ENCODE measurements at regions of chr5 and their contacts with region 1.

Region 1: DNA sequence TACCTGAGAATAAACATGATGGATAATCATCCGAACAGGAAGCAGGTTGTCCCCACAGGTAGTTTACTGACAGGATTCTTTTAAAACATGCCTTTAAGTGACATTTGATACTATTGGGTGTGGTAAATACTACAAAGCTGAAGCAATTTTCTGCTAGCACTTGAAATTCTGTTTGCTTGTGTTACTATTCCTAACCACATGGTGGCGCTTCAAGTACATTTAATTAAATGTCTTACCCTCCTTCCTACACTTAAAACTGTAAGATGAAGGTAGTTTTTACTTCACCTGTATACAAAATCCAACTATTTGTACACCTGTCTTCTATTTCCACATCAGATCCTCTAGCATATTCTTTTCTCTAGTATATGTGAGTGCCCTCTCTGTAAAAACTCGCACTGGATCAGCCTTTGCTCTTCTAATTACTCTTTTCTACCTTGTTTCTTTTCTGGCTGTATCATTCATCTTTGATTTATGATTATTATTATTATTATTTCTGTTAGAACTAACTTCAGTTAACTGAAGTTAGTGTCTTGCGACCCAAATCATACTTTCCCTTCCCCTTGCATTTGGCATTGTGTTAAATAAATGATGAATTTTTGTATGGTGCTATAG is 18.4 kb downstream of the SLC25A46 start:
- DNase-seq: peak in 5 of 9 donors; percentile 21 to 45 (median 33)
- ATAC-seq: peak; percentile 45
- H3K4me3 ChIP-seq: no peak overlapping the region
- H3K4me3 Mint-ChIP-seq: no peak overlapping the region
- H3K27ac ChIP-seq: no peak overlapping the region
- H3K27ac Mint-ChIP-seq: no peak overlapping the region
- H3K4me1 ChIP-seq: peaks cover 0 to 4% of the 10 kb centered on the region in 2 donors
- H3K4me1 Mint-ChIP-seq: peaks cover 7 to 30% (median 11%) of the 10 kb centered on the region in 7 donors
- H3K27me3 ChIP-seq: no peaks in the 10 kb centered on the region
- H3K27me3 Mint-ChIP-seq: no peaks in the 10 kb centered on the region

Region 2: DNA sequence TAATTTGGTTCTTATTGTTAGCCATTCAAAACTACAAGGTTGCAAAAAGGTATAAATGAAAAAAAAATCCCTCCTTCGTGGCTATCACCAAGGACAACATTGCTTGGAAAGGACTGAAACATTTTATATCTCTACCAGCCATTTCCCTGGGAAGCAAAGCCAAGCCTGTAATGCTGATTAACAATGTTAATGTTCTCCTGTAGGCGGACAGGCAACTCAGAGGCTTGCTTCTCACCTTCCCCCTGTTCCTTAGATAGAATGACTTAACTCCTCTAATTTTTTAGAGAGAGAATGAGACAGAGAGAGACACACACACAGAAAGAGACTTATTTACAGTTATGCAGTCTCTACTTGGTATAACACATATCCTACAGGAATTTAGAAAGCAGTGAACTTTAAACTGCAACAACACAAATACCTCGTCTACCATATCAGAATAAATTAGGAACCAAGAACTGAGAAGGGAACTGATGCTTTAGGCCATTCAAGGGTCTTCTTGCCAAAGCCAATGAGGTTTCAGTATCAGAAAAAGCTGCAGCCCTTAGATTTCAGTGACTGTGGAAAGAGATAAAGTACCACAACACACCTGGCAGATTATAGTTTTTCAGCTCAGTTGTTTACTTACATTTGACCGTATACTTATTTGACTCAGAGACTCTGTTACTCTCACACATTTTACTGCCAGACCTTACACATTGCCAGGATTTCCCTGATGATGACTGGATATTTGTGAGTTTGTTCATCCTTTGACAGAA is 1088.4 kb before region 1 on chr5:
- CTCF ChIA-PET with region 1: no interaction called
- POLR2A ChIA-PET with region 1: no interaction called
- intact Hi-C with region 1: no loop called
- DNase-seq: no peak
- ATAC-seq: no peak
- H3K4me3 ChIP-seq: no peak overlapping the region
- H3K4me3 Mint-ChIP-seq: no peak overlapping the region
- H3K27ac ChIP-seq: no peak overlapping the region
- H3K27ac Mint-ChIP-seq: no peak overlapping the region
- H3K4me1 ChIP-seq: no peaks in the 10 kb centered on the region
- H3K4me1 Mint-ChIP-seq: no peaks in the 10 kb centered on the region
- H3K27me3 ChIP-seq: no peaks in the 10 kb centered on the region
- H3K27me3 Mint-ChIP-seq: peaks cover 3 to 16% (median 14%) of the 10 kb centered on the region in 5 donors

Region 3: DNA sequence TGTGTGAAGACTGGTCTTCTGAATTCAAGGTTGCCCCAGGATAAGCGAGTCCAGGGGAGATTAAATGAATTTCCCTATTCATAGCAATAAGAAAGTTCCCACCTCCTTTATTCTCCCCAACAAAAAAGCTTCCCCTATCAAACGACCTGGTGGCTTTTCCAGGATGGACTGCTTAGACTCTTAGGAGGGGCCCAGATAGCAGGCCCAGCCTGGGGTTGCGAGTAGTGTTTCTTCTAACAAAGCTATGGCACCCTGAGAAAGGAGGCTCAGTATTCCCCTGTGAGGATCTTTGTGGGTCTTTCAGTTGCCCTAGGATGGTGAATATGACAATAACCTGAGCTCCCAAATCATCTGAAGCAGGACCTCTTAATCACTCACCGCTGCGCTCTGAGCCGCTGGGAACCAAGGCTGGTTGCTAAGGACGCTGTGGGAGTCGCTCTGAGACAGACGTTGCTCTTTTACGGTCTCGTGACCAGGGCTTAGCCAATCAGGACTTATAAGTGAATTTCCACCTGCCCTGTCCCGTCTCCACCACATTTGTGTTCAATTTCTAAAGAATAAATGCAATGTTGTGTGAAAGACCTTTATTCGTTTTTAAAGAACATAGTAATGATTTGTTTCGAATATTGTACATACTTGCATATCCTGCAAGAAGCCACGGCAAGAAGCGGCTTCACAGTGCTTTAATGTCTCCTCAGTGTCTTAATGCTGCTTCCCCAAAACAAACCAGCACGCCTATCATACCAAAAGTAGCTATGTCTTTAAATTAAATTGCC is 30.8 kb before region 1 on chr5 and contains the start of gene TMEM232:
- CTCF ChIA-PET with region 1: no interaction called
- POLR2A ChIA-PET with region 1: no interaction called
- intact Hi-C with region 1: loop called in 1 of 2 experiments (anchors 1 kb)
- DNase-seq: peak; percentile 40 to 85 (median 65)
- ATAC-seq: peak; percentile 99
- H3K4me3 ChIP-seq: peak within 1 kb of the TSS; percentile 59
- H3K4me3 Mint-ChIP-seq: peak within 1 kb of the TSS; percentile 73 to 97 (median 86)
- H3K27ac ChIP-seq: peak within 1 kb of the TSS; percentile 37
- H3K27ac Mint-ChIP-seq: peak within 1 kb of the TSS in 7 of 9 donors; percentile 15 to 79 (median 65)
- H3K4me1 ChIP-seq: no peaks in the 10 kb centered on the region
- H3K4me1 Mint-ChIP-seq: peaks cover 0 to 8% (median 0%) of the 10 kb centered on the region in 7 donors
- H3K27me3 ChIP-seq: no peaks in the 10 kb centered on the region
- H3K27me3 Mint-ChIP-seq: peaks cover 0 to 3% (median 0%) of the 10 kb centered on the region in 5 donors
- total RNA-seq, gene TMEM232: 1.6 to 3.0 (median 2.9) TPM

Region 4: DNA sequence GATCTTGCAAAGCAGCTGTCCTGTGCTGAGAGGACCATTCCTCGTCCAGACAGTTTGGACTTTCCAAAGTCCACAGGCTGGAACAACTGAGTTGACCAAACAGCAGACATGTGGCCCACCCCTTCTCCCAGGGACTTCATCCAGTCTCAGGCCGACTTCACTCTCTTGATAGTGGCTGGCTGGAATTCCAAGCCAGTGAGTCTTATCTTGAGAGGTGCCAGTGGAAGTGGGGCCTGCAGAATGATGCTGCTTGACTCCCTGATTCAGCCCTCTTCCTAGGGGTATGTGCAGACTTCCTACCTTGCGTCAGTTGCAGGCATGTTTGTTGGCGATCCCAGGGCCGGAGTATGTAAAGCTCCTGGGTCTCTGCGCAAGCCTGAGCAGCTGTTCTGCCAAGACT is 182.9 kb after region 1 on chr5:
- CTCF ChIA-PET with region 1: no interaction called
- POLR2A ChIA-PET with region 1: no interaction called
- intact Hi-C with region 1: no loop called
- DNase-seq: no peak
- ATAC-seq: no peak
- H3K4me3 ChIP-seq: no peak overlapping the region
- H3K4me3 Mint-ChIP-seq: no peak overlapping the region
- H3K27ac ChIP-seq: no peak overlapping the region
- H3K27ac Mint-ChIP-seq: no peak overlapping the region
- H3K4me1 ChIP-seq: no peaks in the 10 kb centered on the region
- H3K4me1 Mint-ChIP-seq: no peaks in the 10 kb centered on the region
- H3K27me3 ChIP-seq: no peaks in the 10 kb centered on the region
- H3K27me3 Mint-ChIP-seq: peaks cover 0 to 18% (median 5%) of the 10 kb centered on the region in 5 donors

Region 5: GRCh38 chr5:111063700-111064322 is 306.6 kb after region 1 on chr5:
- CTCF ChIA-PET with region 1: no interaction called
- POLR2A ChIA-PET with region 1: no interaction called
- intact Hi-C with region 1: loop called in 1 of 2 experiments (anchors 2 kb)
- DNase-seq: no peak
- ATAC-seq: no peak
- H3K4me3 ChIP-seq: no peak overlapping the region
- H3K4me3 Mint-ChIP-seq: no peak overlapping the region
- H3K27ac ChIP-seq: no peak overlapping the region
- H3K27ac Mint-ChIP-seq: no peak overlapping the region
- H3K4me1 ChIP-seq: no peaks in the 10 kb centered on the region
- H3K4me1 Mint-ChIP-seq: no peaks in the 10 kb centered on the region
- H3K27me3 ChIP-seq: peaks cover 0 to 5% of the 10 kb centered on the region in 2 donors
- H3K27me3 Mint-ChIP-seq: peaks cover 58 to 72% (median 64%) of the 10 kb centered on the region in 5 donors

Region 6: DNA sequence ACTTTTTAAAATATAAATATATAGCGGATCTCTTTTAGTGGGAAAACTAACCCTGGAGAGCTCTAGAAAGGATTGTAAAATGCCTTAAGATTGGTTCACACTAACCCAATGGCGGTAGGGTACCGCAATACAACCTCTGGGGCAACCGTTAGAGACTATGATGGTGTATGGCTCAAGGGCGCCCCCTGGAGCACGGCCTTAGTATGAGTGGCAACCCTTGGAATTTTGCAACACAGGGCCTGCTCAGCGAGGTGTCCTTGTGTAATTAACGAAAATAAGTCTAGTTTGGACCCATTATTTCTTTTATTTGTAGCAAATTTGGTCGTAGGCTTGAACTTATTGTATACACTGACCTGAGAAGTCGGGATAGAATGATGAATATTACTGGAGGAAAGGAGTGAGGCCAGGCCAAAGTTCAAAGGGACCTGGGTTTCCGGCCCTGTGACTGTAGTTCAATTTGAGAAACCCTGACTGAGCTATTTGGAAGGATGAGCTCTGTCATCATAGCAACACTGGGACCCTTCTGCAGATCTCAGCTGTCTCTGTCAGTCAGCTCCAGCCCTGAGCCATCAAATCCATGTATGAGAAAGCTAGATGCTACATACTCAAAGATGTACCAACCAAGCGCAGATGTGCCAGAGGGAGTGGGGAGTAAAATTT is 521.8 kb after region 1 on chr5:
- CTCF ChIA-PET with region 1: no interaction called
- POLR2A ChIA-PET with region 1: no interaction called
- intact Hi-C with region 1: loop called in 1 of 2 experiments (anchors 5 kb)
- DNase-seq: peak; percentile 75 to 89 (median 82)
- ATAC-seq: peak; percentile 99
- H3K4me3 ChIP-seq: no peak overlapping the region
- H3K4me3 Mint-ChIP-seq: peak overlapping the region; percentile 2 to 83 (median 64)
- H3K27ac ChIP-seq: no peak overlapping the region
- H3K27ac Mint-ChIP-seq: peak overlapping the region in 7 of 9 donors; percentile 8 to 94 (median 77)
- H3K4me1 ChIP-seq: peaks cover 7 to 13% of the 10 kb centered on the region in 2 donors
- H3K4me1 Mint-ChIP-seq: peaks cover 29 to 94% (median 90%) of the 10 kb centered on the region in 7 donors
- H3K27me3 ChIP-seq: no peaks in the 10 kb centered on the region
- H3K27me3 Mint-ChIP-seq: no peaks in the 10 kb centered on the region

Region 7: GRCh38 chr5:111550279-111551020 is 793.2 kb after region 1 on chr5:
- CTCF ChIA-PET with region 1: no interaction called
- POLR2A ChIA-PET with region 1: no interaction called
- intact Hi-C with region 1: loop called in 1 of 2 experiments (anchors 5 kb)
- DNase-seq: peak; percentile 35 to 79 (median 68)
- ATAC-seq: peak; percentile 93
- H3K4me3 ChIP-seq: no peak overlapping the region
- H3K4me3 Mint-ChIP-seq: peak overlapping the region in 1 of 10 donors; percentile 19
- H3K27ac ChIP-seq: no peak overlapping the region
- H3K27ac Mint-ChIP-seq: peak overlapping the region in 2 of 9 donors; percentile 36 to 47
- H3K4me1 ChIP-seq: peaks cover 0 to 12% of the 10 kb centered on the region in 2 donors
- H3K4me1 Mint-ChIP-seq: peaks cover 8 to 22% (median 20%) of the 10 kb centered on the region in 7 donors
- H3K27me3 ChIP-seq: no peaks in the 10 kb centered on the region
- H3K27me3 Mint-ChIP-seq: peaks cover 0 to 4% (median 2%) of the 10 kb centered on the region in 5 donors

Measured in naive thymus-derived CD4-positive, alpha-beta T cell (primary cell).